Colonic mucosa (tissue), 4 donors: ENCODE measurements at regions of chr3 and their contacts with region 1.

Region 1: DNA sequence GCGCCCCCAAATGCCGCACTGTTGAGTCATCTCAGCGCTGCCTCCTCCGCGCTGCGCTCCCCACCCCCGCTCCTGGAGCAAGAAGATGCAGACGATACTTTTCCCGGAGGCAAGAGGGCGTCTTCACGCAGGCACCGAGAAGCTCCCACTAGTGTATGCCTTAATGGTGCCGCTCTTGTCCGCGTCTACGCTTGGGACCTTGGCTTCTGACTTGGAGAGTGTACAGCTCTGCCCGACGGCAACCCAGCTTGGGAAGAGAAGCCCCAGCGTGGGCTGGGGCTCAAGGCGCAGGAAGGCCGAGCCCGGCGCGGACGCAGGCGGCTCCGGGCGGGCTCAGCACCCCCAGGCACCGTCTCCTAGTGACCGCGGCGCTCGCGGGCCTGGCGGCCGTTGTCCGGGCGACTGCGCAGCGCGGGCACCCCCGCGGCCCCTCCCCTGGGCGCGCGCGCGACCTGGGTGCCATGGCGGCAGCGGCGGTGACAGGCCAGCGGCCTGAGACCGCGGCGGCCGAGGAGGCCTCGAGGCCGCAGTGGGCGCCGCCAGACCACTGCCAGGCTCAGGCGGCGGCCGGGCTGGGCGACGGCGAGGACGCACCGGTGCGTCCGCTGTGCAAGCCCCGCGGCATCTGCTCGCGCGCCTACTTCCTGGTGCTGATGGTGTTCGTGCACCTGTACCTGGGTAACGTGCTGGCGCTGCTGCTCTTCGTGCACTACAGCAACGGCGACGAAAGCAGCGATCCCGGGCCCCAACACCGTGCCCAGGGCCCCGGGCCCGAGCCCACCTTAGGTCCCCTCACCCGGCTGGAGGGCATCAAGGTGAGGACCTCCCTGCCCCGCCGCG is at the start of gene P4HTM:
- DNase-seq: peak; percentile 90
- H3K4me3 ChIP-seq: peak within 1 kb of the TSS; percentile 99
- H3K27ac ChIP-seq: peak within 1 kb of the TSS; percentile 94
- H3K4me1 ChIP-seq: peaks cover 16% of the 10 kb centered on the region
- H3K27me3 ChIP-seq: no peaks in the 10 kb centered on the region
- CTCF ChIP-seq: peak; percentile 23
- total RNA-seq, gene P4HTM: 34.9 to 73.9 TPM

Region 2: DNA sequence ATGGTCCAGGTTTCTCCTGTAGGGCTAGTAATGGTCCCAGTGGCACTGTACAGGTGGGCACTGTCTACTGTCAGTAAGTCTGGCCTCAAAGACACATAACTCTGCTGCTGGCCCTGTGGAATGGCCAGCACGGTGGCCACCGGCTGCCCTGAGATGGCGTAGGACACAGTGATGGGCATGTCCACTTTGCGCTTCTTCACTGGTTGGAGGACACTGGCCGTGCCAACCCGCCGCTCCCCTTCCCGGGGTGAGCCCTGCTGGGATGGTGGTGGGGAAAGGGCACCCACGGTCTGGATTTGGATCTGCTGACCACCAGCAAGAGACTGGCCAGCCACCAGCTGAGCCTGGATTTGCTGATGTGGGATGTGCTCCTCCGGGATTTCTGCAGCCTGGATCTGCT is 67.3 kb after region 1 on chr3:
- intact Hi-C with region 1: no loop called
- DNase-seq: no peak
- H3K4me3 ChIP-seq: no peak overlapping the region
- H3K27ac ChIP-seq: no peak overlapping the region
- H3K4me1 ChIP-seq: no peaks in the 10 kb centered on the region
- H3K27me3 ChIP-seq: no peaks in the 10 kb centered on the region
- CTCF ChIP-seq: no peak

Region 3: DNA sequence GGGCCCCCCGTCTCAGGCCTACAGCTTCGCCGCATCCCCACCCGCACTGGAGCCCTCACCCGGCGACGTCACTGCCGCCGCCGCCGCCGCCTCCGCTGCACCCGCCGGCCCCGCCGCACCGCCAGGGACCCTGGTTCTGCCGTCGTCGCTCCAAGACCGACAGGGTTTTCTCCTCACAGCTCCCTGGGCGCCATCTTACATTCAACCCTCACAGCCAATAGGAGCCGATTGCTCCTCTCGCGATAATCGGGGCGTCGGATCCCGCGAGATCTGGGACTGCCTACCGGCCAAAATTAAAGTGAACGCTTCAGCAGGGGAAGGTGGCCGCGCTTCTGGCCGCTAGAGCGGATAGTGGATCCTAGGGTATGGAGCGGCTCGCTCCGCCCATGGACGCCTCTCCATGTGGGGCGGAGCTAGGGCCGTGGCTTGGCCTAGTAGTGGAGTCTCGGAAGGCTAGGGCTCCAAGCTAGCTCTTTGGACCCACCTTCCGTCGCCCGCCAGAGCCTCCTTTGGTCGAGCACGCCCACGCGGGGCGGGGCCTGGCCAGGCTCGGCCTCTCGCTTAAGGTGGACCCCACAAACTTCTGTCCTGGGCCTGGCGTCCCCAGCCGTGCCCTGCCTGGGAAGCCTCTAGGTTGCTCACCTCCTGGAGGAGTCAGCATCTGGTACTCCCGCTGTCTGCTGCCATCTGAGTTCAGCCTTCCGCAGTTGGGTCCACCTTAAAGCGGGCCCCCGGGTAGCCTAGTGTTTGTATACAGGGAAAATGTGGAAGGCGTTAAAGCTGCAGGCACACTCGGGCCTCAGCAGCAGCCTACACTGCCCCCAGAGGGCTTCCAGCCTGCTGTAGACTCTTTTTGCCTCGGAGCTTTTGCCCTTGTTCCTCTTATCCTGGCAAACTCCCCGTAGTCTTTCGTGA is 104.1 kb after region 1 on chr3 and contains the start of gene QRICH1:
- intact Hi-C with region 1: loop called (anchors 10 kb)
- DNase-seq: peak; percentile 99
- H3K4me3 ChIP-seq: peak within 1 kb of the TSS; percentile 85
- H3K27ac ChIP-seq: peak within 1 kb of the TSS; percentile 96
- H3K4me1 ChIP-seq: peaks cover 17% of the 10 kb centered on the region
- H3K27me3 ChIP-seq: no peaks in the 10 kb centered on the region
- CTCF ChIP-seq: peak; percentile 31
- total RNA-seq, gene QRICH1: 59.8 to 76.0 TPM

Region 4: GRCh38 chr3:49171119-49171774 is 181.2 kb after region 1 on chr3 and contains the start of gene KLHDC8B:
- intact Hi-C with region 1: no loop called
- DNase-seq: peak; percentile 91
- H3K4me3 ChIP-seq: peak within 1 kb of the TSS; percentile 57
- H3K27ac ChIP-seq: peak within 1 kb of the TSS; percentile 53
- H3K4me1 ChIP-seq: no peaks in the 10 kb centered on the region
- H3K27me3 ChIP-seq: no peaks in the 10 kb centered on the region
- CTCF ChIP-seq: peak; percentile 96
- total RNA-seq, gene KLHDC8B: 5.1 to 9.4 TPM